ENCODE measurements at regions of chr6 and their contacts with region 1.

Region 1: GRCh38 chr6:83417880-83418663 is 12.8 kb downstream of the ME1 start:
- DNase-seq: no peak
- ATAC-seq: no peak

Region 2: GRCh38 chr6:83221889-83222479 is 196.1 kb before region 1 on chr6:
- intact Hi-C with region 1: loop called (anchors 10 kb)
- DNase-seq: no peak
- ATAC-seq: no peak

Region 3: DNA sequence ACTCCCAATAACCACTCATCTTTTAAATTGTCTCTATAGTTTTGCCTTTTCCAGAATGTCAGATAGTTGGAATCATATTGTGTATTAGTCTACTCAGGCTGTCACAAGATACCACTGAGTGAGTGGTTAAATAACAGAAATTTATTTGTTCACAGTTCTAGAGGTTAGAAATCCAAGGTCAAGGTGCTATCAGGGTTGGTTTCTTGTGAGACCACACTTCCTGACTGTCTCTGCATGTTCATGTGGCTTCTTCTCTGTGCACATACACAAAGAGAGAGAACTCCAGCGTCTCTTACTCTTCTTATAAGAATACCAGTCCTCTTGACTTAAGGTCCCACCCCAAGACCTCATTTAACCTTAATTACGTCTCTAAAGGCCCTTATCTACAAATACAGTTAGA is 70.4 kb after region 1 on chr6:
- intact Hi-C with region 1: no loop called
- DNase-seq: no peak
- ATAC-seq: no peak